ENCODE measurements at regions of chr9 and their contacts with region 1.

Region 1: DNA sequence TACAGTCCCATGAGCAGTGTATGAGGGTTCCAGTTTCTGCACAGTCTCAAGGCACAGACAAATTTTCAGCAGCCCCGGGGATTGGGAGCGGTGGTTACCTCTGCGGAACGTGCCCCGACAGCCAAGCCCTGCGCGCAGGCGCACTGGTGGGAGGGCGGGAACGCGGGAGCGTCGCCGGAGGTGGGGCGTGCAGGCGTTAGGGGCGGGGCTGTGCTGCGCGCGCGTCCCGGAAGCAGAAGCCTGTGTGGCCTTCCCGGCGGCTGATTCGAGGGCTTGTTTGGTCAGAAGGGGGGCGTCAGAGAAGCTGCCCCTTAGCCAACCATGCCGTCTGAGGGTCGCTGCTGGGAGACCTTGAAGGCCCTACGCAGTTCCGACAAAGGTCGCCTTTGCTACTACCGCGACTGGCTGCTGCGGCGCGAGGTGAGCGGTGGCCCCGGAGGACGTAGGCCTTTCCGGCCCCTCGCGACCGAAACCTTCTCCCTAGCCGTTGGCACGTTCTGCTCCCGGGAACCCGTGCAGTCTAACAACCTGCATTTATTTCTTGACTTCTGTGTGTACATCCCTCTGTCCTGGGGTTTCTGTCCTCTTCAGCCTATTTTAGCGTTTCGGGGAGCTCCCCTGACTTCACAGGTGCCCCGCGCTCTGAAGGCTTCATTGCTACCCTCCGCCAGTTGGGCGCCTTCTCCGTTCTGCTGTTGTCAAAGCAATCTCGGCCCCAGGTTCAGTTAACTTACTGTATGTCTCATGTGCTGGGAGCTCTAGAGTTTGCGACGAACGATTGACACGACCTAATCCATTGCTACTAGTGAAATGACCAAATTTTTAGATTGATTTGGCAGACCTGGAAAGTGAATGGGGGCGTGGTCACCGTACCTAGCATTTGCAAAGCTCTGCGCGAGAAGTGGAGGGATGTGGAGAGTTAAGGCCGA is at the start of gene GLE1:
- DNase-seq: peak; percentile 90
- H3K4me3 ChIP-seq: peak within 1 kb of the TSS; percentile 86 to 95 (median 91)
- H3K27ac ChIP-seq: peak within 1 kb of the TSS; percentile 83
- H3K4me1 ChIP-seq: peaks cover 27% of the 10 kb centered on the region
- H3K27me3 ChIP-seq: no peaks in the 10 kb centered on the region
- CTCF ChIP-seq: no peak
- total RNA-seq, gene GLE1: 19.7 to 28.8 TPM

Region 2: DNA sequence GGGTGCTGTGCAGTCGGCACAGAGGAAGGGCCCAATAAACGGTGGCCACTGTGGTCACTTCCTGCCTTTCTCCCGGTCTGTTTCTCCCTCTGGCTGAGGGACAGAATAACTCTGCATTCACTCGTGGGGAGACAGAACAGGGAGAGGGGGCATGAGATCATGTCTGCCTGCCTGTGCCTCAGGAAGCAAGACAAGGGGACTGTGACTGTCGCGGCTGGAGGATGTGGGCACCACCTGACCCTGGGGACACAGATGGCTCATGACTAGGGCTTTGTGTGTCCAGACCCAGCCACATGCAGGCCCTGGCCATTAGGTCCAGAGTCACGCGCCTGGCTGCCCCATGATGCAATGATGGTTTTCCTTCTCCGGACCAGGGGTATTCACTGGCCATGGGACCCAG is 188.3 kb before region 1 on chr9:
- CTCF ChIA-PET with region 1: no interaction called
- dilution Hi-C with region 1: loop called (anchors 5 kb)
- in situ Hi-C with region 1: no loop called
- intact Hi-C with region 1: no loop called
- DNase-seq: no peak
- H3K4me3 ChIP-seq: no peak overlapping the region
- H3K27ac ChIP-seq: no peak overlapping the region
- H3K4me1 ChIP-seq: peaks cover 4% of the 10 kb centered on the region
- H3K27me3 ChIP-seq: no peaks in the 10 kb centered on the region
- CTCF ChIP-seq: no peak

Region 3: DNA sequence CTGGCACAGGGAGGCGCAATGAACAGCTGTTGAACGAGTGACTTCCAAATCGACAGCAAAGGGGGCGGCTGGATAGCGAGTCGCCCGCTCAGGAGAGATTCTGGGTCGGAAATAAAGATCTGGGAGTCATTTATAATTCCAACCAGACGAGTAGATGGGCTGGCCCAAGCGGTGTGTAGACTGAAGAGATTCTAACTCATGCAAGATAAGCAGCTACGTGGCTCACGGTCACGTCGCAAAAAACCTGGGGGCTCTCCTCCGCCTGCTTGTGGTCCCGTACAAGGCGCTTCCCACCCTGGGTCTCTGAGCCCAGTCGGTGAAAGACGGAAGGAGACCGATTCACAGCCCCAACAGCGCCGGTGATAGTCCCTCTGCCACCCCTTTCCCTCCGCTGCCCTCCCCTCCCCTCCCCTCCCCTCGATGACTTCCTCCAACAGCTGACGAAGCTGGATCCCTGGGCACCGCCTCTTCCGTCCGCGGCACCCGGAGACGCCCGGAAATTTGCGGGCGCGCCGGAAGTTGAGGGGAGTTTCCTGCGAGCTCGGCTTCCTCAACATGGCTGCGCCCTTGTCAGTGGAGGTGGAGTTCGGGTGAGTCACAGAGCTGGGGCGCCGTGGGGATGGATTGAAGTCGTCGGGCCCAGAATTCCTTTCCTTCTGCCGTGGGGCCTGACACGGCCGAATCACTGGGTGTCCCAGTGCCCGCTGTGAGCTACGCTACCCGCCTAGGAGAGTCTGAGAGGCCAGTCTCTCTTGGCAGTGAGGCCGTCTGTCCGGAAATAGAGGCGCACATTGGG is 133.7 kb before region 1 on chr9 and contains the start of gene URM1:
- CTCF ChIA-PET with region 1: no interaction called
- dilution Hi-C with region 1: no loop called
- in situ Hi-C with region 1: no loop called
- intact Hi-C with region 1: loop called (anchors 2 kb)
- DNase-seq: peak; percentile 98
- H3K4me3 ChIP-seq: peak within 1 kb of the TSS; percentile 86 to 94 (median 92)
- H3K27ac ChIP-seq: peak within 1 kb of the TSS; percentile 74
- H3K4me1 ChIP-seq: peaks cover 15% of the 10 kb centered on the region
- H3K27me3 ChIP-seq: no peaks in the 10 kb centered on the region
- CTCF ChIP-seq: peak in 1 of 2 donors; percentile 22
- total RNA-seq, gene URM1: 24.5 to 53.7 TPM

Region 4: GRCh38 chr9:128438343-128439109 is 66.2 kb before region 1 on chr9:
- CTCF ChIA-PET with region 1: no interaction called
- dilution Hi-C with region 1: no loop called
- in situ Hi-C with region 1: no loop called
- intact Hi-C with region 1: no loop called
- DNase-seq: peak; percentile 47
- H3K4me3 ChIP-seq: no peak overlapping the region
- H3K27ac ChIP-seq: no peak overlapping the region
- H3K4me1 ChIP-seq: no peaks in the 10 kb centered on the region
- H3K27me3 ChIP-seq: no peaks in the 10 kb centered on the region
- CTCF ChIP-seq: peak; percentile 78 to 96

Region 5: GRCh38 chr9:128540634-128541360 is 36.0 kb after region 1 on chr9:
- CTCF ChIA-PET with region 1: no interaction called
- dilution Hi-C with region 1: loop called (anchors 5 kb)
- in situ Hi-C with region 1: no loop called
- intact Hi-C with region 1: no loop called
- DNase-seq: no peak
- H3K4me3 ChIP-seq: no peak overlapping the region
- H3K27ac ChIP-seq: no peak overlapping the region
- H3K4me1 ChIP-seq: no peaks in the 10 kb centered on the region
- H3K27me3 ChIP-seq: no peaks in the 10 kb centered on the region
- CTCF ChIP-seq: no peak